ENCODE measurements at regions of chr16 and their contacts with region 1.

Region 1: GRCh38 chr16:87461466-87461991 is 31.3 kb downstream of the ZCCHC14 start:
- DNase-seq: no peak
- H3K4me3 Mint-ChIP-seq: no peak overlapping the region
- H3K27ac Mint-ChIP-seq: no peak overlapping the region
- H3K4me1 Mint-ChIP-seq: peaks cover 38% of the 10 kb centered on the region
- H3K27me3 Mint-ChIP-seq: no peaks in the 10 kb centered on the region

Region 2: DNA sequence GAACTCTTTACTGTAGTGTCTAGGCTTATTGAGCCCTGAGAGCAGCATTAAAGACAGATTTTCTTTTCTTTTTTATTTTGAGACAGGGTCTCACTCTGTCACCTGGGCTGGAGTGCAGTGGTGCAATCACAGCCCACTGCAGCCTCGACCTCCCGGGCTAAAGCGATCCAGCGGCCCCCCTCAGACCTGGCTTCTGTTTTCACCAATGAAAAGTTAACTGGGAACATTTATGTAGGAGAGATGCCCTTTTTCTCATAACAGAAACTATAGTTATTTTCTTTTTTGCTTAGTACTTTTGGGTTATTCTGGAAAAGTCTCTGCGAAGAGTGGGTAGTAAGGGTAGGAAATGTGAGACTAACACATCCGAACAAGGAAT is 67.9 kb before region 1 on chr16:
- intact Hi-C with region 1: loop called (anchors 2 kb)
- DNase-seq: no peak
- H3K4me3 Mint-ChIP-seq: peak overlapping the region; percentile 92
- H3K27ac Mint-ChIP-seq: peak overlapping the region; percentile 87
- H3K4me1 Mint-ChIP-seq: peaks cover 34% of the 10 kb centered on the region
- H3K27me3 Mint-ChIP-seq: no peaks in the 10 kb centered on the region

Region 3: DNA sequence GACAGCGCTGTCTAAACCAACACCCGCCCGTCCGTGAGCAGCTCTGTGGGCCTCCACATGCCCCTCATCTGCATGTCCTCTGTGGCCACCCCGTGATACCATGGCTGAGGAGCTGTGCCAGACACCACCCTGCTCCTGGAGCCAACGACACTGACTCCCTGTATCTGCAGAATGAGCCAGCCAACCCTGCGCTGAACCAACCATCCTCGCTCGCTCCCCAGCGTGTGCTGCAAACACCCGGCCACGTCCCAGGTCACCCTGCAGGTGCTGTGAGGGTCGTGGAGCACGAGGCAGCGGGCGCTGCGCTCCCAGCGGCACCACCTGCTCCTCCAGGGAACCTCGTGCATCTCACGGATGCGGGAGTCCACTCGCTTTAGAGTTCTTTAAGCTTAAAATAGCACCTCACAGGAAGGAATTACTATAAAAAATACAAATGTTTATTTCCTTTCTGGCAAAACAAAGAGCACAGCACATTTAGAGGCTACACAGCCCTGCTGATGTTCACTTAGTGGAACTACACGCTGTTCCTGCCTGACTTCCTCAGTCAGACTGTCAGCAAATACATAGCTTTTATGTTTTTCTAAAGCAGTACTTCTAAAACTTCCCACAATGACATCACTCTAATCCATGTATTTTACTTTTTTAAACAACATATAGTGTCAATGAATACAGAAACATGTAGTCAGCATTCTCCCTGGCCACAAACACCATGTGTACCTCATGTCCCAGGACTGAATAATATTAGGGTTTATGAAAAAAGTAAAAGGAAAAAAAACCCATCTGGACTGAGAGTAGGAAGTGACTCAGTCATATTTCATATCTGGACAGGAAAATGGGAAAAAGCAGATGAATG is 25.9 kb before region 1 on chr16:
- intact Hi-C with region 1: loop called (anchors 2 kb)
- DNase-seq: no peak
- H3K4me3 Mint-ChIP-seq: no peak overlapping the region
- H3K27ac Mint-ChIP-seq: no peak overlapping the region
- H3K4me1 Mint-ChIP-seq: peaks cover 14% of the 10 kb centered on the region
- H3K27me3 Mint-ChIP-seq: peaks cover 17% of the 10 kb centered on the region

Region 4: DNA sequence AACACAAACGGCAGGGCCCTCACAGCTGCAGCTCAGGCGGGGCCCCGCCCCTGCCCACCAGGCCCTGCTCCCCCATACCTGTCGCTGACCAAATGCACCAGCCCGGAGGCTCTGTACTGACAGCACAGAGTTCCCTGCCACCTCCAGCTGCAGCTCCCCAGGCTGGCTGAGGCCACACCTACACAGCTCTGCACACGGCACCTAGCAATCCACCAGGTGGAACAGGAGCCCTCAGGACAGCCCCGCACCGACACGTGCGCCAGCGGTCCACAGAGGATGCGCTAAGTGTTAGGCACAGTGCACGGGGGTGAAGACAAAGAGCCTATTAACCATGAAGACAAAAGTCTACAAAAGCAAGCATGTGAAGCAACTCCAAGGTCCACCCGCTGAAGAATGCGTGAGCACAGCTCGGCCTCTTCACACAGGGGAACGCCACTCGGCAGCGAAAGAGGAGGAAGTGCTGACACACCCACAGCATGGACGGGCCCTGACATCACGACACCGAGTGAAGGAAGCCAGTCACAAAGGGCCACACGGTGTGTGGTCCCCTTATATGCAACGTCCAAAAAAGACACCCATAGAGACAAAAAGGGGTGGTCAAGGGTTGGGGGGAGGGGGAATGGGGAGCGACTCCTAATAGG is 26.0 kb after region 1 on chr16:
- intact Hi-C with region 1: loop called (anchors 1 kb)
- DNase-seq: no peak
- H3K4me3 Mint-ChIP-seq: no peak overlapping the region
- H3K27ac Mint-ChIP-seq: no peak overlapping the region
- H3K4me1 Mint-ChIP-seq: peaks cover 48% of the 10 kb centered on the region
- H3K27me3 Mint-ChIP-seq: peaks cover 19% of the 10 kb centered on the region

Region 5: DNA sequence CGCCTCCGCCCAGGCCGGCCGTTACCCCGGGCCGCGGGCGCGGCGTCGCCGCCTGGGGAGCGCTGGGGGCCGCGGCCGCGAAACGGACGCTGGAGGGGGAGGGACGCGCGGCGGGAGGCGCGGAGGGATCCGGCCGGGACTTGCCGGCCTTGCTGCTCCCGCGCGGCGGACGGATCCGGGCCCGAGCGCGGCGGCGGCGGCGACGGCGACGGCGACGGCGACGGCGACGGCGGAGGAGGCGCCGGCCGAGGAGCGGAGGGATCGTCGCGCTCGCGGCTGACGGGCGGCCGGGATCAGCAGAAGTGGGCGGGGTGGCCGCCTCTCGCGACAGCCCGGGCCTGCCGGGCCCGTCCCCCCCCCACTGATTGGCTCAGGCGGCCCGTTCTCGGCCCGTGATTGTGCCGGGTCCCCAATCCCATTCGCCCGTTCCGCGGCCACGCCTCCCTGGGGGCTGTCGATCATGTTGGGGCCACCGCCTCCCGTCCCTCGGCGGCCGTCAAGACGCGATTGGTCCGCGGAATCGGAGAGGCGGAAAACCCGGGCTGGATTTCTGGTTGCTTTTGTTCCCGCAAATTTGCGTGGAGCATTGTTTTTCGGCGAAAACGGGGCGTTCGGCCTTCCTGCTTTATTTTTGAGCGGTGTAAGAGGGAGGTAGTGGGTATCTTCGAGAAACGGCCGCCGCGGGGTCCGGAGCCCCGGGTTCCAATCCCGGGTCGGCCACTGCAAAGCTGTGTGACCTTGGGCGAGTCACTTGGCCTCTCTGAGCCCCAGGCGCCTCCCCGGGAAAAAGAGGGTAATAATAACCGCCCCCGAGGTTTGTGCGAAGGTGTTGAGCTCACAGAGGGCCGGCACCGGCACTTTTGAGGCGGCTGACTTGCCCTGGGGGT is 31.4 kb after region 1 on chr16 and contains the start of gene ZCCHC14:
- intact Hi-C with region 1: loop called (anchors 1 kb)
- DNase-seq: peak; percentile 98
- H3K4me3 Mint-ChIP-seq: peak within 1 kb of the TSS; percentile 80
- H3K27ac Mint-ChIP-seq: peak within 1 kb of the TSS; percentile 82
- H3K4me1 Mint-ChIP-seq: peaks cover 53% of the 10 kb centered on the region
- H3K27me3 Mint-ChIP-seq: peaks cover 34% of the 10 kb centered on the region
- total RNA-seq, gene ZCCHC14: 9.9 and 11.0 TPM in 2 replicates

Measured in activated T-helper 1 cell treated with anti-CD3 and anti-CD28 coated beads, Interleukin-12 subunit alpha, Interleukin-12 subunit beta, Interleukin-2, Interleukin-4 antibody, amounts not matched to agents 30 ng/mL and 10 ng/mL and 1 ng/mL, durations not matched to agents 14 hours and 24 hours and 36 hours (primary cell).